Activated B cell treated with CpG ODN at 0.5 μM for 24 hours (primary cell): ENCODE measurements at regions of chr2 and their contacts with region 1.

Region 1: GRCh38 chr2:96208143-96209010 is at the start of gene STARD7:
- DNase-seq: peak; percentile 96
- ATAC-seq: peak; percentile 89
- H3K4me3 Mint-ChIP-seq: peak within 1 kb of the TSS; percentile 92
- H3K27ac Mint-ChIP-seq: peak within 1 kb of the TSS; percentile 91
- H3K4me1 Mint-ChIP-seq: peaks cover 74% of the 10 kb centered on the region
- H3K27me3 Mint-ChIP-seq: no peaks in the 10 kb centered on the region
- CTCF ChIP-seq: no peak
- total RNA-seq, gene STARD7: 148 and 158 TPM in 2 replicates

Region 2: DNA sequence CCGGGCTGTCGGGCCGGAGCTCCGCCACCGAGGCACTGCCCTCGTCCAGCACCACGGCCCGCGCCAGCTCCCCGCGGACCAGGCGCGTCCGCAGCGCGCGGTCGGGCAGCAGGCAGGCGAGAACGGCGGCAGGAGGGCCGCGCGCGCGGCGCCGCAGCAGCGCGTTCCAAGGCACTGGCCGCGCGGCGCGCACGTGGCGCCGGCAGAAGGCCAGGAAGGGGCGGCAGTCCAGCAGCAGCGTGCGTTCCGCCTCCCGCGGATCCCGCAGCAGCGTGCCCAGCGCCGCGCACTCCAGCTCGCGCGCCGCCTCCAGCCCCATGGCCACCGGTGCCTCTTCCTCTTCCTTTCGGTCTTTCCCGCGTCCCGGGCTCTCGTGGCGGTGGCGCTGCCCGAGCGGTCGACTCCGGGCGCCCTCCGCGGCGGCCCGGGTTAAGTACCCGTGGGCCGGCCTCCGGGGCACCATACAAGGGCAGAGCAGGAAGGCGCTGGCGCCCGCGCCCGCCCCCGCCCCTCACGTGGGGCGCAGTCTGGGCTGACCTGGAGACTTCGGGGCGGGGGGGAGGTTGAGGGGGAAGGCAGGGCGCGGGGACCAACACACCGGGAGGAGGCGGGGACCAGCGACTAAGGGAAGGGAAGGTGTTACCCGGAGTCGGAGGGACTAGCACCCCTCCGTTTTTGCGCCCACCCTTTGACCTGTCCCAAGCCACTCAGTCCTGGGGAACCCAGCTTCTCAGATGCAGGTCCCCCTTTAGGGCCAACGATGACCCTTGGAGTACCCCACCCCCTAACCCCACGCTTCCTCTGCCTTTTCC is 63.1 kb before region 1 on chr2 and contains the start of gene DUSP2:
- CTCF ChIA-PET with region 1: interaction called, 3 read pairs
- POLR2A ChIA-PET with region 1: interaction called, 41 read pairs
- intact Hi-C with region 1: loop called (anchors 1 kb)
- DNase-seq: peak; percentile 92
- ATAC-seq: peak; percentile 58
- H3K4me3 Mint-ChIP-seq: peak within 1 kb of the TSS; percentile 93
- H3K27ac Mint-ChIP-seq: peak within 1 kb of the TSS; percentile 98
- H3K4me1 Mint-ChIP-seq: peaks cover 71% of the 10 kb centered on the region
- H3K27me3 Mint-ChIP-seq: no peaks in the 10 kb centered on the region
- CTCF ChIP-seq: no peak
- total RNA-seq, gene DUSP2: 118 and 122 TPM in 2 replicates

Region 3: DNA sequence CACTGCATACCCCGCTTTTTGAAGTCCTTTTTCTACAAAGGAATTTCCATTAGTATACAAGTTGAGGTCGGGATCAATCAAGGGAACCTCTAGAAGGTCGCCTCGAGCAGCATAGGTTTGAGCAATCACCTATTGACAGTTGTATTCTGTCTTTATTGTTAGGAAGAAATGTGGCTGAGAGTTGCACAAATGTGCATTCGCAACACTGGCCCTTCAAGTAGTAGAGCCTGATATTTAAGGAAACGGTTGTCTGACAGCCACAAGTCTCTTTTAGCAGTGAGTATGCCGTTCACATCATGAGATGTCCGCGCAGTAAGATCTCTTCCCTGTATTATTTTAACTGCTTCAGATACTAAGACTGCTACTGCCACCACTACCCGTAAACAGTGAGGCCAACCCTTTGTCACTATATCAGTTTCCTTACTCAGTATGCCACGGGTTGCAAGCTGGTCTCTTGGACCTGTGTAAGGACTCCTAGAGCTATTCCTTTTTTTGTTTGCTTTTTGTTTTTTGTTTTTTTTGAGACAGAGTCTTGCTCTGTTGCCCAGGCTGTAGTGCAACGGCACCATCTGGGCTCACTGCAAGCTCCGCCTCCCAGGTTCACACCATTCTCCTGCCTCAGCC is 10.2 kb after region 1 on chr2:
- CTCF ChIA-PET with region 1: no interaction called
- POLR2A ChIA-PET with region 1: interaction called, 63 read pairs
- intact Hi-C with region 1: no loop called
- DNase-seq: no peak
- ATAC-seq: no peak
- H3K4me3 Mint-ChIP-seq: no peak overlapping the region
- H3K27ac Mint-ChIP-seq: no peak overlapping the region
- H3K4me1 Mint-ChIP-seq: peaks cover 5% of the 10 kb centered on the region
- H3K27me3 Mint-ChIP-seq: no peaks in the 10 kb centered on the region
- CTCF ChIP-seq: no peak

Region 4: DNA sequence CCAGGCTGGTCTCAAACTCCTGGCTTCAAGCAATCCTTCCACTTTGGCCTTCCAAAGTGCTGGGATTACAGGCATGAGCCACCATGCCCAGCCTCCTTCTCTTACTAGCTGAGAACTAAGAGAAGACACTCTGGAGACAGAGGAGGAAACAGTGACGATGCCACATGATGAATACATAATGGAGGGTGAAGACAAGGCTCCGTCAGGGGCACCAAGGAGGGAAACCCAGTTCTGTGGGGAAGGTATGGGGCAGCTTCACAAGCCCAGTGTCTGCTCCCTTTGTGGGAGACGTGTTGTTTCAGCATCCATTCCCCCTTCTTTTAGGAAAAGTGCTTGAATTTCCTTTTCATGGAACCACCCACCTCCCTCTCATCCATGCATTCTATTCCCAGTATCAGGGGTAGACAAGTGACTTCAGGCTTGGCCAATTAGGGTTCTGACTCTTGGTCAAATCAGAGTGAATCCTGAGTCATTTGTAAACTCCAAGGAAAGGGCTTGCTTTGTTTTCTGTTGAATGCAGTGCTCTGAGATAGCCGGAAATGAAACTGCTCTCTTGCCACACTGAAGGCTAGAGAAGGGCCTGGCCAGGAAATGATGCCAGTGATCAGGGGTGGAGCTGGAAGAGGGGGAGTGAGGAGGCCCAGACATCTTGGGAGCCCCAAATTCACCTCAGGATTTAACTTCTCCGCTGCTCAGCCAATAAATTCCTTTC is 33.7 kb after region 1 on chr2:
- CTCF ChIA-PET with region 1: no interaction called
- POLR2A ChIA-PET with region 1: interaction called, 35 read pairs
- intact Hi-C with region 1: loop called (anchors 2 kb)
- DNase-seq: no peak
- ATAC-seq: peak; percentile 89
- H3K4me3 Mint-ChIP-seq: peak overlapping the region; percentile 56
- H3K27ac Mint-ChIP-seq: peak overlapping the region; percentile 90
- H3K4me1 Mint-ChIP-seq: peaks cover 49% of the 10 kb centered on the region
- H3K27me3 Mint-ChIP-seq: no peaks in the 10 kb centered on the region
- CTCF ChIP-seq: no peak

Region 5: DNA sequence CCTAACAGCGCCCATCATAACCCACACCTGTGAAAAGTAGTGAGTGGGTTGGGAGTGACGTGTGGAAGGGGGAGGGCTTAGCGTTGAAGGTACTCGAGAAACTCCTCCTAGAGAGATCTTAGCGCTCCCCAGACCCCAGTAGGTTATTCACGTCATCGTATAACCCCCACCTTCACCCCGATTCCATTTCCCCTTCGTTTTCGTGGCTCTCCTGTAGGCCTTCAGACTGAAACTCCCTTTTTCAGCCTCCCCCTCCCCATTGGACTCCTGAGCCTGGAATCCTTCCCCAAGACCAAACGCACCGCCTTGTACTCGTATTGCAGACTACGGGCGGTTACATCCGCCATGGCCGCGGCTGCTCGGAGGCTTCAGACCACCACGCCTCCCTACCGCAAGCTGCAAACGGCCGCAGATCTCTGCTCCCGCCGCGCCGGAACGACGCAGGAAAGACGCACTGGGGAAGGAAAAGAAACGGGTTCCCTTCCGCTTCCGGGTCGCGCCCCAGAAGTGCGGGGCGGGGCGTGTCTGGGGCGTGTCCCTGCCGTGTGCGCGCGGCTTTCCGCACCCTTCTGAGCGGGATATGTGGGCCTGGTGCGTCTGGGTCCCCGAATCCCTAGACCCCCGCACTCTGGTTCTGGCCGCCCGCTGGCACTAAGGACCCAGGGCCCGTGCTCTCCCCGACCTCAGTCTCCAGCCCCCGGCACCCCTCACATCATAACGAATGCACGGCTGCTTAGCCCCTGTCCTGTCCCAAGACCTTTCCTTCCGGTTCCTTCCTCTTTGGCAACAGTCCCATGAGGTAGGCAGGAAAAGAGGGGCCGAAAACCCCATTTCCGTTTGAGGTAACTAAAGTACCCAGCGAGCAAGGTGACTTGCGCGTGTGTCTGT is 97.0 kb after region 1 on chr2 and contains the start of gene SNRNP200:
- CTCF ChIA-PET with region 1: no interaction called
- POLR2A ChIA-PET with region 1: interaction called, 15 read pairs
- intact Hi-C with region 1: no loop called
- DNase-seq: peak; percentile 84
- ATAC-seq: peak; percentile 95
- H3K4me3 Mint-ChIP-seq: peak within 1 kb of the TSS; percentile 97
- H3K27ac Mint-ChIP-seq: peak within 1 kb of the TSS; percentile 97
- H3K4me1 Mint-ChIP-seq: peaks cover 45% of the 10 kb centered on the region
- H3K27me3 Mint-ChIP-seq: no peaks in the 10 kb centered on the region
- CTCF ChIP-seq: no peak
- total RNA-seq, gene SNRNP200: 185 and 208 TPM in 2 replicates

Region 6: GRCh38 chr2:96536445-96537065 is 328.2 kb after region 1 on chr2 and contains the start of gene ARID5A:
- CTCF ChIA-PET with region 1: no interaction called
- POLR2A ChIA-PET with region 1: interaction called, 3 read pairs
- intact Hi-C with region 1: loop called (anchors 2 kb)
- DNase-seq: peak; percentile 79
- ATAC-seq: peak; percentile 74
- H3K4me3 Mint-ChIP-seq: peak within 1 kb of the TSS; percentile 91
- H3K27ac Mint-ChIP-seq: peak within 1 kb of the TSS; percentile 90
- H3K4me1 Mint-ChIP-seq: peaks cover 53% of the 10 kb centered on the region
- H3K27me3 Mint-ChIP-seq: no peaks in the 10 kb centered on the region
- CTCF ChIP-seq: no peak
- total RNA-seq, gene ARID5A: 73.4 and 83.5 TPM in 2 replicates

Region 7: DNA sequence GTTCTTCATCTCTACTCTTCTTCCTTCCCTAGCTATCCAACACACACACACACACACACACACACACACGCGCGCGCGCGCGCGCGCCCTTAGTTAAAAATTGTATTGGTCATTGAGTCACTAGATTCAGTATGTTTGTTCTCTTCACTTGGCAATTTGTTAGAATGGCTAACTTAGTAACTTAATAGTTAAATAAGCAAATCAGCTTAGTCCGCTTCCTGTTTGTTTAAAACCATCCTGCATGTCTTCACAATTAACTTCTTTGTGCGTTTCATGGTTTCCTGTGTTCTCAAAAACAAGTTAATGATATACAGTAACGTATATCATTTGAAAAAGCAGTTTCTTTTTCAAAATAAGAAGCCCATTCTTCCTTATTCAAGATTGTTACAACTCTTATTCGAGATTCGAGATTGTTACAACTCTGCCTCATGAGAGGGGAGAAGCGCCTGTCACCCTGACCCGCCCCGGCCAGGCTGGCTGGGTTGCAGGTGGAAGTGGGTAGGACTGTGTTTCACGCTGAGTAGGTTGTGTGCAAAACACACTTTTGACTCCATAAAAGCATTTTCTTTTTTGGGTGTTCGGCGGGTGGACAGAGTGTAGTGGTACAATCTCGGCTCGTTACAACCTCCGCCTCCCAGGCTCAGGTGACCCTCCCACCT is 598.2 kb after region 1 on chr2:
- CTCF ChIA-PET with region 1: no interaction called
- POLR2A ChIA-PET with region 1: no interaction called
- intact Hi-C with region 1: no loop called
- DNase-seq: no peak
- ATAC-seq: peak; percentile 83
- H3K4me3 Mint-ChIP-seq: peak overlapping the region; percentile 67
- H3K27ac Mint-ChIP-seq: peak overlapping the region; percentile 96
- H3K4me1 Mint-ChIP-seq: peaks cover 25% of the 10 kb centered on the region
- H3K27me3 Mint-ChIP-seq: no peaks in the 10 kb centered on the region
- CTCF ChIP-seq: no peak

Region 8: GRCh38 chr2:97806738-97807618 is 1598.6 kb after region 1 on chr2:
- CTCF ChIA-PET with region 1: no interaction called
- POLR2A ChIA-PET with region 1: no interaction called
- intact Hi-C with region 1: no loop called
- DNase-seq: peak; percentile 68
- ATAC-seq: peak; percentile 96
- H3K4me3 Mint-ChIP-seq: no peak overlapping the region
- H3K27ac Mint-ChIP-seq: no peak overlapping the region
- H3K4me1 Mint-ChIP-seq: no peaks in the 10 kb centered on the region
- H3K27me3 Mint-ChIP-seq: no peaks in the 10 kb centered on the region
- CTCF ChIP-seq: peak; percentile 33